Esophagus muscularis mucosa (tissue), 4 donors: ENCODE measurements at regions of chr7 and their contacts with region 1.

Region 1: DNA sequence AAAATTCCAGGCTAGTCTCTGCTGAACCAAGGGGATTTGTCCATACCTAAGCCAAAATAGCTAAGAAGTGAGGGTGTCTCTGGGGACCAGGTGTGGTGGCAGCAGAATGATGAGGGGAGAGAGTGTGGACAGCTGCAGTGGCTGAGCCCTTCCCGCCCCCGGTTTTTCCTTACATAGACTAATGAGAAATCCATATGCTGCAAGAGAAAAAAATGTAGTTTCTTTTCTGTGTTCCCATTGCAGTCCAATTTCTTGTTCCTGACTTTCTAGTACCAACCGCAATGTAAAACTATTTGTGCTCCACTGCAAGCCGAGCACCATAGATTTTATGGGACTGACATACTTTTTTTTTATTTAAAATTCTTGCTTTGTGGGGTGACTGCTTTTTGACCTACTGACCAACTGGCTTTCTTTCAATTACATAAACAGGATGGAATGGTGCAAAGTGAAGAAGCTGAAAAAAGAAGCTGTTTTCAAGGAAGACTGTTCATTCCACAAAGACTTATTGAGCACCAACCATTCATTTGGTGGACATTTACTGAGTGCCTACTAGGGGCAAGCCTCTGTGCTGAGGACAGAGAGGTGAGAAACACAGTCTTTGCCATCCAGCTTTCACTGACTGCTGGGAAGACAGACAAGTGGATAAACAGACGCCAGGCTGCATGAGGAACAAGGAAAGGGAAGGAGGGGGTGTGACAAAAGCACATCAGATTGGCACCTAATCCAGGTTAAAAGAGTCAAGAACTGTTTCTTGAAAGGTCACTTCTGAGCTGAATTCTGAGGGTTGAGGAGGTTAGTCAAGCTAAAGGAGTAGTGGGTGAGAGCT is 9.8 kb downstream of the CEP41 start:
- DNase-seq: no peak
- H3K4me3 ChIP-seq: peak overlapping the region; percentile 1 to 24 (median 12)
- H3K27ac ChIP-seq: peak overlapping the region in 2 of 4 donors; percentile 8 to 15
- H3K4me1 ChIP-seq: peaks cover 0 to 19% (median 15%) of the 10 kb centered on the region in 4 donors
- H3K27me3 ChIP-seq: no peaks in the 10 kb centered on the region
- CTCF ChIP-seq: no peak
- EP300 ChIP-seq: no peak
- POLR2A ChIP-seq: no peak

Region 2: DNA sequence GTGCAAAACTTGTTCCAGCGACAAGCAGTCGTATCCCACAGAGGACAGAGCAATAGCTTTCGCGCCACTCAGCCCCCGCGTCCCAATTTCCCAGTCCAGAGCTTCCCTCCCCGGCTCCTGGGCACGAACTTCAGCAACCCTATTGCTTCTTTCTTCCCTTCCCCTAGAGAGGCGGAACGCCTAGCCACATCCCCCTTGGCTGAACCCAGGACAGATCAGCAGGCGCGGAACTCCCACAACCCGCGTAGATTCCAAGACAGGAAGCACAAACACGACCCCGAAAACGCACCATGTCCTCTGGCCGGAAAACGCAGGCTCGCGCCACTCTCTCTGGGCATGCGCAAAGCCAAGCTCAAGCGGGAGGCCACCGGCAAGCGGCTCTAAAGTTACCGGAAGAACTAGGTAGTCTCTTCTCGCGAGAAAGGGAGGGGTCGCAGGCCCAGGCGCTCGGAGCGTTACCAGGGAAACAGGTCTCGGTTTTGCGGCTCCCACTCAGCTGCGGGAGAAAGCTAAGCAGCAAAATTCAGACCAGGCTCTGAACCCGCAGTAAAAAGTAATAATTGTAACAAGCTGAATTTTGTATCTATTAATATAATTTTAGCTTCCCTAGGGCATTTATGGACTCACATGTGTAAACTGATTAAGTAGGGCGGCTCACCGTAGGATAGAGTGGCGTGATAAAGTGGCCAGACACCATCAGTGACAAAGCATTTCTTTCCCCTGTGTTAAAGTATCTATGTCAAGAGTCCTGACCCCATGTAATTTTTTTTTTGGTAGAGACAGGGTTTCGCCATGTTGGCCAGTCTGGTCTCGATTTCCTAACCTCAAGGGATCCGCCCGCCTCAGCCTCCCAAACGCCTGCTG is 225.7 kb before region 1 on chr7 and contains the start of gene TMEM209:
- intact Hi-C with region 1: loop called (anchors 10 kb)
- DNase-seq: peak; percentile 96
- H3K4me3 ChIP-seq: peak within 1 kb of the TSS; percentile 73 to 89 (median 82)
- H3K27ac ChIP-seq: peak within 1 kb of the TSS; percentile 88 to 92 (median 92)
- H3K4me1 ChIP-seq: peaks cover 4 to 14% (median 10%) of the 10 kb centered on the region in 4 donors
- H3K27me3 ChIP-seq: no peaks in the 10 kb centered on the region
- CTCF ChIP-seq: peak in 1 of 3 experiments; percentile 15
- EP300 ChIP-seq: no peak
- POLR2A ChIP-seq: peak; percentile 23
- total RNA-seq, gene TMEM209: 6.8 to 8.7 (median 8.0) TPM

Region 3: DNA sequence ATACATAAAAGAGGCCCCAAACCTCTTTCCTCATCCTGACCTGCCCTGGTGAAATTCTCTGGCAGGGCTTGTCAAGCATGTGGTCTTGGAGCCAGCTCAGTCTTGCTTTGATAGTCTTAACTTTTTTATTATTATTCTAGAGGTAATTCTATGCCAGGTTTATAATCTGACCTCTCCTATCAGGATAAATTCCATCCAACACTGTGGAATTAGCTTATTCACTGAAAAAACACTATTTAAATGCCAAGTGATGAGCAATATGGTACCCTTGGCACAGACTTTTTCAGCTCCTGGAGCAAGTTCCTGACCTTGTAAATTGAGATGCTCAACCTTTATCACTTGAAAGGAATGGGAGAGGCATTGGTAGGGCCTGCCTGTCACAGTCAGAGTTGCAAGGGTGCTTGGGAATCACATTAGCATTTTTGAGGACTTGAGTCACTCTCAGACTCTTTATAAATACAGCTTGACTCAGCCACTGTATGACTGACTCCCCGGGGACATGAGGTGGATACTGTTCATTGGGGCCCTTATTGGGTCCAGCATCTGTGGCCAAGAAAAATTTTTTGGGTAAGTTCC is 138.3 kb before region 1 on chr7 and contains the start of gene CPA4:
- intact Hi-C with region 1: no loop called
- DNase-seq: no peak
- H3K4me3 ChIP-seq: no peak within 1 kb of the TSS
- H3K27ac ChIP-seq: no peak within 1 kb of the TSS
- H3K4me1 ChIP-seq: no peaks in the 10 kb centered on the region
- H3K27me3 ChIP-seq: no peaks in the 10 kb centered on the region
- CTCF ChIP-seq: no peak
- EP300 ChIP-seq: no peak
- POLR2A ChIP-seq: no peak
- total RNA-seq, gene CPA4: not detected

Region 4: GRCh38 chr7:130356121-130356875 is 74.8 kb before region 1 on chr7:
- intact Hi-C with region 1: loop called (anchors 10 kb)
- DNase-seq: no peak
- H3K4me3 ChIP-seq: no peak overlapping the region
- H3K27ac ChIP-seq: peak overlapping the region; percentile 65 to 79 (median 71)
- H3K4me1 ChIP-seq: peaks cover 11 to 42% (median 35%) of the 10 kb centered on the region in 4 donors
- H3K27me3 ChIP-seq: no peaks in the 10 kb centered on the region
- CTCF ChIP-seq: no peak
- EP300 ChIP-seq: no peak
- POLR2A ChIP-seq: no peak